ENCODE measurements at regions of chr1 and their contacts with region 1.

Region 1: DNA sequence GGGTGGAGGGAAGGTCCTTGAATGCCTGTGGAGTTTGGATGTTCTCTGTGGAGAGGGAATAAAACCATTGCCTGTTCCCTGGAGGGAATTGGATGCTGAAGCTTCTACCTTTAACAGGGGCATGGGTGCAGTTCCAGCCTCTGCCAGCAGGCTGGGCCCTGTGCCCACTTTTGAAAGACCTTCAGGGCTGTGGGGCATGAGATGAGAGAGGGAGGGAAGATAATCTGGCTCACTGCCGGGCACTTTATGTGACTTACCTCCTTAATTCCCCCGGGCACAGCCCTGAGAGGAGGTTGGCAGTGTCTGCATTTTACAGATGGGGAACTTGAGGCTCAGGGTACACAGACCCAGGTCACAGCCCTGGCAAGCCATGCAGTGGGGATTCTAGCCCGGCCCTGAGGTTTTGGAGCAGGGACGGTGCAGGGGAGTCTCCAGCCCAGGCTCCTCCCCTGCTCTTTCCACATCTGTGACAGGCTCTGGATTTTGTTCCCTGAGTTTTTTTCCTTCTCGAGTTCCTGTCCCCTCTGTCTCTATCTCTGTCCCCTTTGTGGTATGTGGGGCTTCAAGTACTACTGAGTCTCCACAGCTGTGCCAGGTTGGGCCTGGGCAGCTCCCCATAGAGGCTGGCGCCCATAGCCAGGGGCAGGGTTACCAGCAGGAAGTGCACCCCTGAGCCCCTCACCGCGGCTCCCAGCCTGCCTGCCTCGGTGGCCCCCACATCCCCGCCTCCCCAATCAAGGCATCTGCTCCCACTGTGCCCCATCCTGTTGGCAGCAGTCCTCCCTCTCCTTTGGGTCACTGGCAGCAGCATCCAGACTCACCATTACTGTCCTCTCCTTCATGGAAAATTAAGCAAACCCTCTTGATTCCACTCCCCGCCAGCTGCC is 14.0 kb upstream of the THEMIS2 start:
- DNase-seq: peak; percentile 77
- H3K4me3 ChIP-seq: no peak overlapping the region
- H3K27ac ChIP-seq: no peak overlapping the region
- H3K4me1 ChIP-seq: peaks cover 13% of the 10 kb centered on the region
- H3K27me3 ChIP-seq: no peaks in the 10 kb centered on the region
- CTCF ChIP-seq: peak; percentile 99

Region 2: GRCh38 chr1:27145934-27146354 is 712.4 kb before region 1 on chr1:
- CTCF ChIA-PET with region 1: no interaction called
- dilution Hi-C with region 1: no loop called
- in situ Hi-C with region 1: no loop called
- intact Hi-C with region 1: no loop called
- DNase-seq: peak; percentile 85
- H3K4me3 ChIP-seq: no peak overlapping the region
- H3K27ac ChIP-seq: peak overlapping the region; percentile 44
- H3K4me1 ChIP-seq: peaks cover 66% of the 10 kb centered on the region
- H3K27me3 ChIP-seq: no peaks in the 10 kb centered on the region
- CTCF ChIP-seq: no peak

Region 3: DNA sequence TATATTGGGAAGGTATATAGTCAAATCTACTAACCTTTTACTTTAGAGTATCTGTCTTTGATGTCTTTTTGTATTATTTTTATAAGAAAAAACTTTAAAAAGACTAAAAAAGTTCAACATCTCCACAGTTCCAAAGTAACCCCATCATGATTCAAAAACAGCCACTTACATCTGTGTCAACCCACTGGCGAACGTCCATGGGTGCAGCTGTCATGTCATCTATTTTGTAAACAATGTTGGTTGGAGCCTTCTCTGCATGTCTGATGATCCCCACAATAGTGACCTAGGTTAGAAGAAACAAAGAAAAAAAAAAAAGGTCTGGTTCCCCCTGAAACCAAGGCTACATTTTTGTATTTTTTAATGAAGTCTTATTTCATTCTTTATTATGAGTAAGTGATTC is 48.4 kb after region 1 on chr1:
- CTCF ChIA-PET with region 1: no interaction called
- dilution Hi-C with region 1: loop called (anchors 5 kb)
- in situ Hi-C with region 1: no loop called
- intact Hi-C with region 1: no loop called
- DNase-seq: no peak
- H3K4me3 ChIP-seq: no peak overlapping the region
- H3K27ac ChIP-seq: no peak overlapping the region
- H3K4me1 ChIP-seq: no peaks in the 10 kb centered on the region
- H3K27me3 ChIP-seq: no peaks in the 10 kb centered on the region
- CTCF ChIP-seq: no peak

Region 4: DNA sequence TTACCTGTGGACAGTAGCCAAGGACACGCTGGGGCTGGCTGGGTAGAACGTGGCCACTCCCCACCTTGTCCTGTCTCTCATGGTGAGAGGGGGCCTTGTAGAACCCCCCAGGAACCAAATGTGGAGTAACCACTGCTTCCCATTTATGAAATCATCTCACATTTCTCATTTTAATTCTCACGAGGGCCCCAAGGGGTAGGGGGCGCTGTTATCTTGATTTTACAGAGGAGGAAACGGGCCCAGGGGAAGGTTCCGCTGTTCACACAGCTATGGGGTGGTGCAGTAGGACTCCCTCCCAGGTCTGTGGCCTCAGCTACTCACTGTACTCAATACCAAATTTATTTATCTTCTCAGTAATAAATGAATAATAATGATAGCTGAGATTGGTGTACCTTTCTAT is 82.0 kb after region 1 on chr1:
- CTCF ChIA-PET with region 1: no interaction called
- dilution Hi-C with region 1: no loop called
- in situ Hi-C with region 1: no loop called
- intact Hi-C with region 1: no loop called
- DNase-seq: no peak
- H3K4me3 ChIP-seq: no peak overlapping the region
- H3K27ac ChIP-seq: no peak overlapping the region
- H3K4me1 ChIP-seq: peaks cover 6% of the 10 kb centered on the region
- H3K27me3 ChIP-seq: no peaks in the 10 kb centered on the region
- CTCF ChIP-seq: peak; percentile 33 to 36

Region 5: GRCh38 chr1:27970401-27970800 is 112.1 kb after region 1 on chr1:
- CTCF ChIA-PET with region 1: interaction called, 5 read pairs
- dilution Hi-C with region 1: no loop called
- in situ Hi-C with region 1: loop called (anchors 5 kb)
- intact Hi-C with region 1: no loop called
- DNase-seq: no peak
- H3K4me3 ChIP-seq: no peak overlapping the region
- H3K27ac ChIP-seq: no peak overlapping the region
- H3K4me1 ChIP-seq: peaks cover 26% of the 10 kb centered on the region
- H3K27me3 ChIP-seq: no peaks in the 10 kb centered on the region
- CTCF ChIP-seq: no peak

Region 6: DNA sequence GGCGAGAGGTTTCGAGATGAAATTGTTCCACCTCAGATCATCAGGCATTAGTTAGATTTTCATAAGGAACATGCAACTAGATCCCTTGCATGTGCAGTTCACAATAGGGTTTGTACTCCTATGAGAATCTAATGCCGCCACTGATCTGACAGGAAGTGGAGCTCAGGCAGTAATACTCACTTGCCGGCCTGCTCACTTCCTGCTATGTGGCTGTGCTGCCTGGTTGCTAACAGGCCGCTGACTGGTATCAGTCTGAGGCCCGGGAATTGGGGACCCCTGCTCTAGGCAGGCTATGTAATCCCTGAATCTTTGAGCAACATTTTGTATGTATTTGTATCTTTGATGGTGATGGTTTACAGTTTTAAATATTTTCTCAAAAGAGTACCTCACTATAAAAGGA is 134.0 kb after region 1 on chr1:
- CTCF ChIA-PET with region 1: no interaction called
- dilution Hi-C with region 1: loop called (anchors 5 kb)
- in situ Hi-C with region 1: no loop called
- intact Hi-C with region 1: no loop called
- DNase-seq: no peak
- H3K4me3 ChIP-seq: no peak overlapping the region
- H3K27ac ChIP-seq: no peak overlapping the region
- H3K4me1 ChIP-seq: no peaks in the 10 kb centered on the region
- H3K27me3 ChIP-seq: no peaks in the 10 kb centered on the region
- CTCF ChIP-seq: no peak

Region 7: GRCh38 chr1:28208818-28209441 is 350.6 kb after region 1 on chr1:
- CTCF ChIA-PET with region 1: interaction called, 5 read pairs
- dilution Hi-C with region 1: no loop called
- in situ Hi-C with region 1: no loop called
- intact Hi-C with region 1: loop called (anchors 1 kb)
- DNase-seq: peak; percentile 62
- H3K4me3 ChIP-seq: no peak overlapping the region
- H3K27ac ChIP-seq: no peak overlapping the region
- H3K4me1 ChIP-seq: no peaks in the 10 kb centered on the region
- H3K27me3 ChIP-seq: no peaks in the 10 kb centered on the region
- CTCF ChIP-seq: peak; percentile 73 to 84